Heart left ventricle (tissue), 16 donors: ENCODE measurements at regions of chr3 and their contacts with region 1.

Region 1: DNA sequence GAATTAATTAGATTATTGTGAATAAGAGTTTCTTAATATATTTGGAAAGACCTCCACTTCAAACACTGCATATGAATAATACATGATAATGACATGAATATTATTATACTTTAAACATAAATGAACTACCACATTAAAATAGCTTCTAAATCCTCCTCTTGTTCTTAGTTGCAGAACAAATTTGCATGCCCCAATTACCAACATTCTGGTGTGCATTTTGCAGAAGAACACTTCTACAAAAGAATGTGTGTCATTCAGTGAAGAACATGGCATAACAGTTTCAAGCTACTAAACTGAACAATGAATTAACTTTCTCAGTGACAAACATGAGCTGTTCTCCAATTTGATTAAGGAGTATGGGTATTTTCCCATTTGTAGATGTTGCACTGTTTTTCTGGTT is 711.3 kb upstream of the NAALADL2 start:
- DNase-seq: no peak
- ATAC-seq: no peak
- H3K4me3 ChIP-seq: no peak overlapping the region
- H3K27ac ChIP-seq: no peak overlapping the region
- H3K4me1 ChIP-seq: no peaks in the 10 kb centered on the region
- H3K27me3 ChIP-seq: no peaks in the 10 kb centered on the region
- CTCF ChIP-seq: no peak
- POLR2A ChIP-seq: no peak

Region 2: GRCh38 chr3:174116421-174116820 is 31.4 kb before region 1 on chr3:
- intact Hi-C with region 1: loop called in 1 of 10 experiments (anchors 2 kb)
- DNase-seq: no peak
- ATAC-seq: no peak
- H3K4me3 ChIP-seq: no peak overlapping the region
- H3K27ac ChIP-seq: no peak overlapping the region
- H3K4me1 ChIP-seq: no peaks in the 10 kb centered on the region
- H3K27me3 ChIP-seq: no peaks in the 10 kb centered on the region
- CTCF ChIP-seq: no peak
- POLR2A ChIP-seq: no peak

Region 3: GRCh38 chr3:174186377-174186989 is 38.7 kb after region 1 on chr3:
- intact Hi-C with region 1: no loop called
- DNase-seq: no peak
- ATAC-seq: no peak
- H3K4me3 ChIP-seq: no peak overlapping the region
- H3K27ac ChIP-seq: no peak overlapping the region
- H3K4me1 ChIP-seq: peaks cover 0 to 9% (median 0%) of the 10 kb centered on the region in 12 donors
- H3K27me3 ChIP-seq: no peaks in the 10 kb centered on the region
- CTCF ChIP-seq: no peak
- POLR2A ChIP-seq: no peak